Breast epithelium (tissue), 4 donors: ENCODE measurements at regions of chr15 and their contacts with region 1.

Region 1: GRCh38 chr15:52208306-52208946 is 17.2 kb upstream of the GNB5 start:
- DNase-seq: no peak
- H3K4me3 ChIP-seq: no peak overlapping the region
- H3K27ac ChIP-seq: no peak overlapping the region
- H3K4me1 ChIP-seq: no peaks in the 10 kb centered on the region
- H3K27me3 ChIP-seq: no peaks in the 10 kb centered on the region
- CTCF ChIP-seq: peak; percentile 15 to 39 (median 30)
- POLR2A ChIP-seq: no peak

Region 2: GRCh38 chr15:52186651-52187486 is 21.6 kb before region 1 on chr15:
- intact Hi-C with region 1: no loop called
- DNase-seq: no peak
- H3K4me3 ChIP-seq: no peak overlapping the region
- H3K27ac ChIP-seq: peak overlapping the region in 1 of 2 donors; percentile 57
- H3K4me1 ChIP-seq: no peaks in the 10 kb centered on the region
- H3K27me3 ChIP-seq: no peaks in the 10 kb centered on the region
- CTCF ChIP-seq: no peak
- POLR2A ChIP-seq: no peak

Region 3: DNA sequence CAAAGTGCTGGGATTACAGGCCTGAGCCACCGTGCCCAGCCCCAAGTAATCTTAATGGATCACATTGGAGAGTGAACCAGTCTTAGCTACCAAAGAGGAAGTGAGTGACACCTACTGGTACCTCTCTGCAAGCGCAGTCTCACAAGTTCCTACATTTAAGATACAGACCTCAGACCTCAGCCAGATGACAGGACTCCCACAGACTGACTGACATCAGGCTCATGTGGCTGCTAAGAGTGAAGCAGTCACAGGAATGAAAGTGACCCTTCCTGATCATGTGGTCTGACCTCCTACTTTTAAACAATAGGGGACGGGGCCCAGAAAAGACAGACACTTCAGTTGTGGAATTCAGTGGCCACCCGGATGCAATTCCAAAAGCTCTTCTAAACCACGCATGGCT is 19.0 kb after region 1 on chr15:
- intact Hi-C with region 1: loop called (anchors 1 kb)
- DNase-seq: peak in 1 of 2 donors; percentile 60
- H3K4me3 ChIP-seq: no peak overlapping the region
- H3K27ac ChIP-seq: no peak overlapping the region
- H3K4me1 ChIP-seq: no peaks in the 10 kb centered on the region
- H3K27me3 ChIP-seq: no peaks in the 10 kb centered on the region
- CTCF ChIP-seq: peak; percentile 40 to 65 (median 64)
- POLR2A ChIP-seq: no peak

Region 4: GRCh38 chr15:52256366-52256765 is 47.9 kb after region 1 on chr15:
- intact Hi-C with region 1: no loop called
- DNase-seq: peak; percentile 62 to 67
- H3K4me3 ChIP-seq: no peak overlapping the region
- H3K27ac ChIP-seq: no peak overlapping the region
- H3K4me1 ChIP-seq: no peaks in the 10 kb centered on the region
- H3K27me3 ChIP-seq: no peaks in the 10 kb centered on the region
- CTCF ChIP-seq: peak; percentile 53 to 90 (median 87)
- POLR2A ChIP-seq: no peak